CD4-positive, alpha-beta memory T cell (primary cell): ENCODE measurements at regions of chr16 and their contacts with region 1.

Region 1: DNA sequence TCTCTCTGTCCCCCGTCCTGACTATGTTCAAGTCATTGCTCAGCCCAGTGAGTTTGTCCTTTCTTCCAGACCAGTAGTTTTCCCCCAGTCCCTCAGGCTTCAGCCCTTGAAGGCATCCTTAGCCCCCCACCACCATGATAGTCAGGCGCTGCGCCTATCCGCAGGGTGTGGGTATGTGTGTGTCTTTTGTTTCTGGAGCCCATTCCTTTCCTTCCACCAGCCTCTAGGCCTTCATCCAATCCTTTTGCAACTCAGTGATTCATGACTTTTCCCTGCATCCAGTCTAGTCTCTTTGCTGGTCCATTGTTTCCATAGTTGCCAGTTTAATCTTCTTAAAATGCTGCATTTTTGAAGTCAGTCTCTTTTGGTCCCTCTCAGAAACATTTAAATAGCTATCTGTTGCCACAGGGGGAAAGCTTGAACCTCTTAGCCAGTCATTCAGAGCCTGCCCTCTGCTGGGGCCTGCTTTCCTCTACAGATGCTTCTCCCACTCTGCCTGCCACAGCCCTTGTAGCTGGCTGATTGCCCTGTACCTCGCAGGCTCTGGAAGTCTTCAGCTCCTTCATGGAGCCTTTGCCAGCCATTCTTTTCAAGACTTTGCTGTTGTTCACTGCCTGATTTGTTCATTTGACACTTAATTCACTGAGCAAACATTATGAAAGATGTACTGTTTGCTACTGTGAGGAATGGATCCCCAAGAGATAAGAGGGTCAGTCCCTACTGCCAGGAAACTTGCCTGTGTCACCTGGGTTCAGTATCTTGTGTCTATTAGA is 55.9 kb upstream of the ADCY7 start:
- DNase-seq: peak; percentile 53 to 63 (median 56)
- H3K4me3 ChIP-seq: no peak overlapping the region
- H3K4me3 Mint-ChIP-seq: no peak overlapping the region
- H3K27ac ChIP-seq: no peak overlapping the region
- H3K27ac Mint-ChIP-seq: peak overlapping the region; percentile 17 to 91 (median 59)
- H3K4me1 ChIP-seq: peaks cover 4% of the 10 kb centered on the region
- H3K4me1 Mint-ChIP-seq: peaks cover 16 to 26% (median 26%) of the 10 kb centered on the region in 4 donors
- H3K27me3 ChIP-seq: no peaks in the 10 kb centered on the region
- H3K27me3 Mint-ChIP-seq: no peaks in the 10 kb centered on the region

Region 2: GRCh38 chr16:50024684-50025536 is 185.5 kb before region 1 on chr16 and contains the start of gene CNEP1R1:
- CTCF ChIA-PET with region 1: interaction called, 121 read pairs
- POLR2A ChIA-PET with region 1: interaction called, 10 read pairs
- intact Hi-C with region 1: loop called (anchors 1 kb)
- DNase-seq: peak; percentile 93 to 97 (median 95)
- H3K4me3 ChIP-seq: peak within 1 kb of the TSS; percentile 76 to 85
- H3K4me3 Mint-ChIP-seq: peak within 1 kb of the TSS; percentile 94 to 99 (median 96)
- H3K27ac ChIP-seq: peak within 1 kb of the TSS; percentile 75
- H3K27ac Mint-ChIP-seq: peak within 1 kb of the TSS; percentile 91 to 99 (median 96)
- H3K4me1 ChIP-seq: peaks cover 34% of the 10 kb centered on the region
- H3K4me1 Mint-ChIP-seq: peaks cover 18 to 32% (median 24%) of the 10 kb centered on the region in 4 donors
- H3K27me3 ChIP-seq: no peaks in the 10 kb centered on the region
- H3K27me3 Mint-ChIP-seq: peaks cover 0 to 4% of the 10 kb centered on the region in 2 donors
- total RNA-seq, gene CNEP1R1: 34.2 to 40.8 TPM

Region 3: GRCh38 chr16:50152807-50153452 is 57.5 kb before region 1 on chr16 and contains the start of gene TENT4B:
- CTCF ChIA-PET with region 1: interaction called, 12 read pairs
- POLR2A ChIA-PET with region 1: interaction called, 5 read pairs
- intact Hi-C with region 1: loop called (anchors 2 kb)
- DNase-seq: peak; percentile 92 to 95 (median 94)
- H3K4me3 ChIP-seq: peak within 1 kb of the TSS; percentile 84 to 93
- H3K4me3 Mint-ChIP-seq: peak within 1 kb of the TSS; percentile 91 to 97 (median 94)
- H3K27ac ChIP-seq: peak within 1 kb of the TSS; percentile 89
- H3K27ac Mint-ChIP-seq: peak within 1 kb of the TSS; percentile 93 to 99 (median 97)
- H3K4me1 ChIP-seq: peaks cover 47% of the 10 kb centered on the region
- H3K4me1 Mint-ChIP-seq: peaks cover 25 to 41% (median 34%) of the 10 kb centered on the region in 4 donors
- H3K27me3 ChIP-seq: no peaks in the 10 kb centered on the region
- H3K27me3 Mint-ChIP-seq: no peaks in the 10 kb centered on the region
- total RNA-seq, gene TENT4B: 22.4 to 23.5 TPM

Region 4: GRCh38 chr16:50195276-50195675 is 15.2 kb before region 1 on chr16:
- CTCF ChIA-PET with region 1: interaction called, 43 read pairs
- POLR2A ChIA-PET with region 1: interaction called, 5 read pairs
- intact Hi-C with region 1: no loop called
- DNase-seq: no peak
- H3K4me3 ChIP-seq: no peak overlapping the region
- H3K4me3 Mint-ChIP-seq: peak overlapping the region in 6 of 8 donors; percentile 1 to 76 (median 21)
- H3K27ac ChIP-seq: no peak overlapping the region
- H3K27ac Mint-ChIP-seq: peak overlapping the region; percentile 15 to 75 (median 30)
- H3K4me1 ChIP-seq: peaks cover 41% of the 10 kb centered on the region
- H3K4me1 Mint-ChIP-seq: peaks cover 42 to 81% (median 65%) of the 10 kb centered on the region in 4 donors
- H3K27me3 ChIP-seq: no peaks in the 10 kb centered on the region
- H3K27me3 Mint-ChIP-seq: no peaks in the 10 kb centered on the region

Region 5: GRCh38 chr16:50354629-50355456 is 144.4 kb after region 1 on chr16:
- CTCF ChIA-PET with region 1: interaction called, 53 read pairs
- POLR2A ChIA-PET with region 1: no interaction called
- intact Hi-C with region 1: loop called (anchors 1 kb)
- DNase-seq: peak in 4 of 5 donors; percentile 42 to 61 (median 54)
- H3K4me3 ChIP-seq: no peak overlapping the region
- H3K4me3 Mint-ChIP-seq: no peak overlapping the region
- H3K27ac ChIP-seq: no peak overlapping the region
- H3K27ac Mint-ChIP-seq: peak overlapping the region in 6 of 7 donors; percentile 0 to 89 (median 41)
- H3K4me1 ChIP-seq: peaks cover 3% of the 10 kb centered on the region
- H3K4me1 Mint-ChIP-seq: peaks cover 10 to 36% (median 23%) of the 10 kb centered on the region in 4 donors
- H3K27me3 ChIP-seq: no peaks in the 10 kb centered on the region
- H3K27me3 Mint-ChIP-seq: no peaks in the 10 kb centered on the region

Region 6: DNA sequence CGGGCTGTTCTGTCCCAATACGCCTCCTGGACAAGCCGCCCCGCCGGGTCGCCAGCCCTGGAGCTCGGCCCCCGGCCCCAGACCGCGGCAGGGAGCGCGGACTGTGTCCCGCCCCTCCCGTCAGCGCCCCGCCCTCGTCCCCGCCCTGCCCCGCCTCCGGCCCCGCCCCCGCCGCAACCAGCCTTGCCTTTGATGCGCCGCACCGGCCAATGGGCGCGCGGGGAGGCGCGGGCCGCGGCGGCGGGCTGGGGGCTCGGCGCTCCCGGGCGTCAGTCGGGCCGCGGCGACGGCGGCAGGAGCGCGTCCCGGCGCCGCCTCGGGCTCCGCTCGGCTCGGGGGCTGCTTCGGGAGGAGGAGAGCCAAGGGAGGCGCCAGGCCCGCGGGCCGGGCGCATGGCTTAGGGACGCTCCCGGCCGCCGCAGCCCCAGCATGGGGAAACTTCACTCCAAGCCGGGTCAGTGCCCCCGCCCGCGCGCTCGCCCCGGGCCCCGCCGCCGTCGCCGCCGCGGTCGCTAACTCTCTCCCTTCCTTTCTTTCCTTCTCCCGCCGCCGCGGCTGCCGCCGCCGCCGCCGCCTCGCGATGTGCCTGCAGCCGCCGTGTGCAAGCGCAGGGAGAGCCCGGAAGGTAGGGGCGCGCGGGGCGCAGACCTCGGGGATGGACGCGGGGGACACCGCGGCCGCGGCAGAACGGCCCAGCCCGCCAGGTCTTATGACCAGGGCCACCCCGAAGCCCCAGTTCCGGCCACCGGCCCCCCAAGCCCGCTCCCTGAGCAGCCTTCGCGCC is 337.9 kb after region 1 on chr16 and contains the start of gene NKD1:
- CTCF ChIA-PET with region 1: no interaction called
- POLR2A ChIA-PET with region 1: no interaction called
- intact Hi-C with region 1: loop called (anchors 10 kb)
- DNase-seq: peak; percentile 64 to 78 (median 69)
- H3K4me3 ChIP-seq: peak within 1 kb of the TSS in 1 of 2 donors; percentile 68
- H3K4me3 Mint-ChIP-seq: peak within 1 kb of the TSS; percentile 81 to 89 (median 88)
- H3K27ac ChIP-seq: peak within 1 kb of the TSS; percentile 43
- H3K27ac Mint-ChIP-seq: peak within 1 kb of the TSS; percentile 90 to 96 (median 95)
- H3K4me1 ChIP-seq: peaks cover 30% of the 10 kb centered on the region
- H3K4me1 Mint-ChIP-seq: peaks cover 14 to 35% (median 25%) of the 10 kb centered on the region in 4 donors
- H3K27me3 ChIP-seq: no peaks in the 10 kb centered on the region
- H3K27me3 Mint-ChIP-seq: no peaks in the 10 kb centered on the region
- total RNA-seq, gene NKD1: 3.8 to 4.6 TPM